Mammary epithelial cell (primary cell): ENCODE measurements at regions of chr4 and their contacts with region 1.

Region 1: GRCh38 chr4:48698029-48698971 is 81.8 kb downstream of the FRYL start:
- DNase-seq: peak; percentile 94
- H3K4me3 ChIP-seq: peak overlapping the region in 2 of 3 experiments; percentile 5 to 66
- H3K27ac ChIP-seq: peak overlapping the region; percentile 100
- H3K4me1 ChIP-seq: peaks cover 46% of the 10 kb centered on the region
- H3K27me3 ChIP-seq: no peaks in the 10 kb centered on the region
- CTCF ChIP-seq: no peak

Region 2: GRCh38 chr4:48665555-48666186 is 32.6 kb before region 1 on chr4:
- CTCF ChIA-PET with region 1: interaction called, 3 read pairs
- dilution Hi-C with region 1: no loop called
- in situ Hi-C with region 1: no loop called
- intact Hi-C with region 1: loop called (anchors 2 kb)
- DNase-seq: peak; percentile 65
- H3K4me3 ChIP-seq: peak overlapping the region in 1 of 3 experiments; percentile 8
- H3K27ac ChIP-seq: peak overlapping the region; percentile 11
- H3K4me1 ChIP-seq: peaks cover 40% of the 10 kb centered on the region
- H3K27me3 ChIP-seq: no peaks in the 10 kb centered on the region
- CTCF ChIP-seq: no peak

Region 3: GRCh38 chr4:48830706-48831531 is 132.6 kb after region 1 on chr4 and contains the start of gene OCIAD1:
- CTCF ChIA-PET with region 1: no interaction called
- dilution Hi-C with region 1: no loop called
- in situ Hi-C with region 1: no loop called
- intact Hi-C with region 1: loop called (anchors 5 kb)
- DNase-seq: peak; percentile 98
- H3K4me3 ChIP-seq: peak within 1 kb of the TSS; percentile 50 to 98 (median 98)
- H3K27ac ChIP-seq: peak within 1 kb of the TSS; percentile 94
- H3K4me1 ChIP-seq: peaks cover 9% of the 10 kb centered on the region
- H3K27me3 ChIP-seq: no peaks in the 10 kb centered on the region
- CTCF ChIP-seq: no peak
- total RNA-seq, gene OCIAD1: 85.5 to 125 TPM

Region 4: GRCh38 chr4:48939785-48940184 is 241.5 kb after region 1 on chr4:
- CTCF ChIA-PET with region 1: interaction called, 11 read pairs
- dilution Hi-C with region 1: no loop called
- in situ Hi-C with region 1: no loop called
- intact Hi-C with region 1: no loop called
- DNase-seq: peak; percentile 91
- H3K4me3 ChIP-seq: no peak overlapping the region
- H3K27ac ChIP-seq: peak overlapping the region; percentile 55
- H3K4me1 ChIP-seq: peaks cover 19% of the 10 kb centered on the region
- H3K27me3 ChIP-seq: no peaks in the 10 kb centered on the region
- CTCF ChIP-seq: peak in 1 of 2 donors; percentile 2